Endothelial cell of umbilical vein (primary cell): ENCODE measurements at regions of chr4 and their contacts with region 1.

Region 1: DNA sequence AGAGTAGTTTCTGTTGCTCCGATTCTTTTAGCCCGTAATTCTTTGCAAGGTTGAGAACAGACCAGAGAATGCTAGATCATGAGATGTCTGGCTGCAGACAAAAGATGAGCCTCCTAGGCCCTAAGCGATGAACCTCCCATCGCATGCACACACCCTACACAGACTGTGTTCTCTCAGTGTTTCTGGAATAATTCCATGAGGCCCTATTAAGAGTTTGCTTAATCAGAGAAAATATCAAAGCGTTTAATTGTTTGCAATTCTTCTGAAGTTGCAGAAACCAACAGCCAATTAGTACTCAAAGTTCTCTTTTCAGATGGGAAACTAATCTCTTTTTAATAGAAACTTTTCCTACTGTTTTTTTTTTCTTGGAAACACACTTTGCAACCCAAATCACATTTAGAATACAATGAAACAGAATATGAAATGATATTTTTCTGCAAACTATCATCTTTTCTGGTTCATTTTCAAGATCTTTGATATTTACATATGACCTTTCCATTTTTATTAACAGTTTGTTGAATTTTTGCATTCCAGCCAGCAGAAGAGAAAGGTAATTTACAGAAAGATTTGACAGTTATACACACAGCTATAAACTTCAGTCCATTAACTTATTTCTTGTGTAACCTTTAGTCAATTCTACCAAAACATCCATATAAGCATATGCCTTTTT is 1525.6 kb downstream of the ARAP2 start:
- DNase-seq: no peak
- H3K4me3 ChIP-seq: no peak overlapping the region
- H3K27ac ChIP-seq: no peak overlapping the region
- H3K4me1 ChIP-seq: no peaks in the 10 kb centered on the region
- H3K27me3 ChIP-seq: no peaks in the 10 kb centered on the region
- CTCF ChIP-seq: no peak
- POLR2A ChIP-seq: no peak

Region 2: DNA sequence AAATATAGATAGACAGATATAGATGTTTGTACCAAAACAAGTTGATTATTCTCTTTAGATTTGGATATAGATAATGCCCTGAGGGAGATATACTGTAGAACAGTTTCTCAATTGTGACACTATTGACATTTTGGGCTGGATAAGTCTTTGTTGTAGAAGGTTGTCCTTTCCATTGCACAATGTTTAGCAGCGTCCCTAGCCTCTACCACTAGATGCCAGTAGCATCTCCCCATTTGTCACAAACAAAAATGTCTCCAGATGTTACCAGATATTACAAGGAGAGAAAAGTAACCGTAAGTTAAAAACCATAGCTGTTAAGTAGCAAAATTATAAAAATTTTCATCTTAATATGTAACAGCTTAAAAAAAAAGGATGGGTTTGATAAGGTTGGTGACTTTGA is 1069.7 kb before region 1 on chr4:
- CTCF ChIA-PET with region 1: interaction called, 4 read pairs
- POLR2A ChIA-PET with region 1: no interaction called
- dilution Hi-C with region 1: no loop called
- intact Hi-C with region 1: loop called (anchors 5 kb)
- DNase-seq: no peak
- H3K4me3 ChIP-seq: no peak overlapping the region
- H3K27ac ChIP-seq: no peak overlapping the region
- H3K4me1 ChIP-seq: no peaks in the 10 kb centered on the region
- H3K27me3 ChIP-seq: no peaks in the 10 kb centered on the region
- CTCF ChIP-seq: no peak
- POLR2A ChIP-seq: no peak

Region 3: DNA sequence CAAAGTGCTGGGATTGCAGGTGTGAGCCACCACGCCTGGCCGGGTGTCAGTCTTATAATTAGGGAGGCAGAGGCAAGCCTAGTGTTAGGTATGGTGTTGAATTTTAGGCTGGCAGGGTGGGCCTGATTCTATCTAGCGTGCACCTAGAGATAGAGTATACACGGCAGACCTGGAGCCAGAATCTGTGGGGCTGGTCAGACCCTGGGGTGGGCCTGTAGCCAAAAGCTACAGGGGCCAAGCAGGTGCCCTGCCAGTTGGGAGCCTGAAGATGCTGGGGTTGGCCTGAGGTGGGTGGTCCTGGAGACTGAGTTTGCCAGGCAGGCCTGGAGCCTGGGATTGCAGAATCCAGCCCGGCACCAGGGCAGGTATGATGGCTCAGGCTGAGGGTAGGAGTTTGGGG is 54.7 kb before region 1 on chr4:
- CTCF ChIA-PET with region 1: no interaction called
- POLR2A ChIA-PET with region 1: no interaction called
- dilution Hi-C with region 1: no loop called
- intact Hi-C with region 1: no loop called
- DNase-seq: no peak
- H3K4me3 ChIP-seq: no peak overlapping the region
- H3K27ac ChIP-seq: no peak overlapping the region
- H3K4me1 ChIP-seq: no peaks in the 10 kb centered on the region
- H3K27me3 ChIP-seq: no peaks in the 10 kb centered on the region
- CTCF ChIP-seq: no peak
- POLR2A ChIP-seq: no peak